ENCODE measurements at regions of chr10 and their contacts with region 1.

Region 1: DNA sequence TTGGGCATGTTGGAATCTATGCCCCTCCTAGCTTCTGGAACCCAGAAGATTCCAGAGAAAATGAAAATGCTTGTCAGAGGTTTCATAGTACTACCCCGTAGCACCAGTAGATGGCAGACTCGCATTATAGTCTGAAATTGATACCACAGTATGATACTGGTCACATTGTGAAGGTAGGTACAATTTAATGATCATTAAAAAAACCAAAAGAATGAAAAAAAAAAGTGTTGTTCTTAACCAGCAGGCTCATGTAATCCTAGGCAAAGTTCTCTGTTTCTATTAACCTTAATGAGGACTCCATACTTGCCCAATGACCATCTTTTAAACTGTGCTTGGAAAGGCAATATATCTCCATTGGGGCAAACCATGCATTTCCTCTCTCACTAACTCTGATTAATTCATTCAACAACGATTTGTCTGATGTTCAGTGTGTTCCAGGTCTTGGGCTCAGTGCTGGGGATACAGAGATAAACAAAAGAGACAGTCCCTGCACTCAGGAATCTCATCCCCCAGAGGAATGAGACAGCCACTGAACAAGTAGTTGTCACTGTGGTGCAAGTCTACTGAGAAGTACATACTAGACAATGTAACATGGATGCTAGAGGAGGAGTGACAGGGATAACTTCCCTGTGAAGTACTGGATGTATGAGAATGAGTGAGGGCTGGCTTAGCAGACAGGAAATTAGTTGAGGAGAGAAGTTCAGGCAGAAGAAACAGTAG is 223.5 kb upstream of the PHYHIPL start:
- DNase-seq: peak; percentile 65
- H3K4me3 Mint-ChIP-seq: no peak overlapping the region
- H3K27ac Mint-ChIP-seq: no peak overlapping the region
- H3K4me1 Mint-ChIP-seq: peaks cover 7% of the 10 kb centered on the region
- H3K27me3 Mint-ChIP-seq: peaks cover 20% of the 10 kb centered on the region
- CTCF ChIP-seq: peak; percentile 75

Region 2: GRCh38 chr10:58781873-58782488 is 170.9 kb before region 1 on chr10:
- CTCF ChIA-PET with region 1: no interaction called
- intact Hi-C with region 1: loop called (anchors 5 kb)
- DNase-seq: peak; percentile 23
- H3K4me3 Mint-ChIP-seq: no peak overlapping the region
- H3K27ac Mint-ChIP-seq: no peak overlapping the region
- H3K4me1 Mint-ChIP-seq: peaks cover 26% of the 10 kb centered on the region
- H3K27me3 Mint-ChIP-seq: no peaks in the 10 kb centered on the region
- CTCF ChIP-seq: peak; percentile 73

Region 3: GRCh38 chr10:58830697-58831096 is 122.2 kb before region 1 on chr10:
- CTCF ChIA-PET with region 1: no interaction called
- intact Hi-C with region 1: no loop called
- DNase-seq: no peak
- H3K4me3 Mint-ChIP-seq: no peak overlapping the region
- H3K27ac Mint-ChIP-seq: no peak overlapping the region
- H3K4me1 Mint-ChIP-seq: no peaks in the 10 kb centered on the region
- H3K27me3 Mint-ChIP-seq: no peaks in the 10 kb centered on the region
- CTCF ChIP-seq: no peak

Region 4: GRCh38 chr10:58921421-58921855 is 31.5 kb before region 1 on chr10:
- CTCF ChIA-PET with region 1: no interaction called
- intact Hi-C with region 1: no loop called
- DNase-seq: no peak
- H3K4me3 Mint-ChIP-seq: no peak overlapping the region
- H3K27ac Mint-ChIP-seq: no peak overlapping the region
- H3K4me1 Mint-ChIP-seq: peaks cover 16% of the 10 kb centered on the region
- H3K27me3 Mint-ChIP-seq: no peaks in the 10 kb centered on the region
- CTCF ChIP-seq: no peak

Region 5: GRCh38 chr10:59127991-59128390 is 175.1 kb after region 1 on chr10:
- CTCF ChIA-PET with region 1: interaction called, 3 read pairs
- intact Hi-C with region 1: loop called (anchors 1 kb)
- DNase-seq: no peak
- H3K4me3 Mint-ChIP-seq: no peak overlapping the region
- H3K27ac Mint-ChIP-seq: no peak overlapping the region
- H3K4me1 Mint-ChIP-seq: no peaks in the 10 kb centered on the region
- H3K27me3 Mint-ChIP-seq: peaks cover 51% of the 10 kb centered on the region
- CTCF ChIP-seq: no peak

Region 6: GRCh38 chr10:59227136-59227673 is 274.3 kb after region 1 on chr10:
- CTCF ChIA-PET with region 1: no interaction called
- intact Hi-C with region 1: loop called (anchors 2 kb)
- DNase-seq: peak; percentile 22
- H3K4me3 Mint-ChIP-seq: no peak overlapping the region
- H3K27ac Mint-ChIP-seq: no peak overlapping the region
- H3K4me1 Mint-ChIP-seq: no peaks in the 10 kb centered on the region
- H3K27me3 Mint-ChIP-seq: no peaks in the 10 kb centered on the region
- CTCF ChIP-seq: no peak

Region 7: DNA sequence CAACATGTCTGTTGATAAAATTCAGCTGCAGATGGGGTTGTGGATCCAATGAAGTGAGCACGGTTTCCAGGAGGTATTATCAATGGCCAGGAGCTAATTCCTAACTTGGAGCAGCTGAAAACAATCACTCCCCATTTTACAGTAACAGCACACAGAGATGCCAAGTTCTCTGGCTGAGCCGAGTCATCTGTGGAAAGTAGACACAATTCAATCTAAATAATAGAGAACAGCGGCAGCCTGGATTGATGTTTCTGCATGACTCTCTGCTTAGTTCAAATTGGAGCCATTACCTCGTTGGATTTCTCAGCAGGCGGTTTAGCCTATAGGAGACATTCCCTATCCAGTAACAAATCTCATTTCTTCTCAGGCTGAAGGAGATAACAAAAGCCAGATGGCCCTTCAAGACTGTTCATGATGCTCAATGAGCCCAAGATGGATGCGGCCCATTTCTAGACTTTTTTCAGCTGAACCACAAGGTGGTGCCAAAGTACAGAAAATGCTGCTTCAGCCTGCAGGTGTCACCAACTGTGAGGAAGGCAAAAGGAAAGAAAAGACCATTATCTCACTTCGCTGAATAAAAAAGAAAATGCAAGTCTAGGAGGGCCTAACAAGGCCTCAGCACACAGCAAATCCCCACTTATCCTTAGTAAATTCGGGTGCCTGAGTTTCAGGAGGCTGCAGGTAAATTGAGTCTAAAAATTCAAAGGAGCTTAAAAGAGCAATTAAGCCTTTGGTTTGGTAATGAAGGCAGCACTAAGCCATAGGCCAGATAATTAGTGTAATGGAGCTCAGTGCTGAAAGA is 673.0 kb after region 1 on chr10:
- CTCF ChIA-PET with region 1: no interaction called
- intact Hi-C with region 1: loop called (anchors 5 kb)
- DNase-seq: peak; percentile 54
- H3K4me3 Mint-ChIP-seq: no peak overlapping the region
- H3K27ac Mint-ChIP-seq: no peak overlapping the region
- H3K4me1 Mint-ChIP-seq: peaks cover 7% of the 10 kb centered on the region
- H3K27me3 Mint-ChIP-seq: peaks cover 53% of the 10 kb centered on the region
- CTCF ChIP-seq: peak; percentile 86

Measured in Calu3 (cell line).